ENCODE measurements at regions of chr1 and their contacts with region 1.

Region 1: DNA sequence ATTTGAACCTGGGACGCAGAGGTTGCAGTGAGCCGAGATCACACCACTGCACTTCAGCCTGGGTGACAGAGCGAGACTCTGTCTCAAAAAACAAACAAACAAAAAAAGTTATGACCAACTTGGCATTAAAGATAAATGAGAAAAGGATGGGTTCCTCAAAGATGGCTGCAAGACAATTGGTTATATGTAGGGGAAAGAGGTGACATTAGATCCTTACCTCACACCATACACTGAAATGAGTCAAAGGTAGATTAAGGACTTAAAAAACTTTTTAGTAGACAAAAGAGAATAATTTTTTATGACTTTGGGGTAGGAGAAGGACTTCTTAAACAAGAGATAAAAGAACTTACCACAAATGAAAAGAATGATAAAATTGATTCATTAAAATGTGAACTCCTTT is 74.5 kb downstream of the SYF2 start:
- DNase-seq: no peak
- H3K4me3 ChIP-seq: no peak overlapping the region
- H3K27ac ChIP-seq: no peak overlapping the region
- H3K4me1 ChIP-seq: no peaks in the 10 kb centered on the region
- CTCF ChIP-seq: no peak

Region 2: DNA sequence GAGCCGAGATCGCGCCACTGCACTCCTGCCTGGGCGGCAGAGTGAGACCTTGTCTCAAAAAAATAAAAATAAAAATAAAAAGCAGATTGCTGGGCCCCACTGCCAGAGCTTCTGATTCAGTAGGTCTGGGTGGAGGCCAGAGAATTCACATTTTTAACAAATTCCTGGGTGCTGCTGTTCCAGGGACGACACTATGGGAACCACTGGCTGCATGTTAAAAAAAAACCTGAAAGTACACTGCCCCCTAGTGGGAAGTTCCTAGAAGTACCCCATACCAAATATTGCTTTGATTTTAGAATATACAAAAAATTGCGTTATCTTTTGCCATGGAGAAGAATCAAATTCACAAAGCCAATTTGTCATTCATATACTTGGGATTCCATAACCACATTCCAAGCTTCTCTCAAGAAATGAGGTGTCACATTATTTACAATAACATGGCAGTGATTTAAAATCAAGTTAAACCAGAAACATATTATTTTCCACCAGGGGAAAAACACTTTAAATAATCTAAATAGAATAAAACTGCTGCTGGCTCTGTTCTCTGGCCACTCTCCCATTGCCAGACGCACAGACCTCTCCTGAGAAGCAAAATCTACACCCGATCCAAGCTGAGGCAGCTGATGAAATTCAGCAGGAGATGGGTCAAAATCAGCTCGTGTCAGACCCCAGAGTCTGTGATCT is 47.1 kb after region 1 on chr1:
- CTCF ChIA-PET with region 1: no interaction called
- POLR2A ChIA-PET with region 1: no interaction called
- intact Hi-C with region 1: loop called (anchors 5 kb)
- DNase-seq: peak; percentile 71
- H3K4me3 ChIP-seq: no peak overlapping the region
- H3K27ac ChIP-seq: no peak overlapping the region
- H3K4me1 ChIP-seq: no peaks in the 10 kb centered on the region
- CTCF ChIP-seq: peak; percentile 97

Measured in OCI-LY7 (cell line).